CD8-positive, alpha-beta T cell (primary cell): ENCODE measurements at regions of chr10 and their contacts with region 1.

Region 1: DNA sequence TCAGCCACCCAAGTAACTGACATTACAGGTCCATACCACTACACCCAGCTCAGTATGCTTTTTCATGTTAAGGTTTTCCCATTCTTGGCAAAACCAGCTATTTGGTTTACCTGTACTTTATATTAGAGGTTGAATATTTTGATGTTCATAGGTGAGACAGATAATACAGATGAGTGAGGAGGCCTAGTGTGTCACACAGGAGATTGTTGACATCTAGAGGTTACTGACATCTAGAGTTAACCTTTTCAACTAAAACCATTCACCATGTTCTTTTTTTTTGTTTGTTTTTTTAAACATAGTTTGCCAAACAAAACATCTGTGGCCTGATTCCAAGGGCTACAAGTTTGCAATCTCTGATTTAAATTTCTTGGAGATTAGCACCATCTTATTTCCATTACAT is 8.0 kb downstream of the GHITM start:
- DNase-seq: no peak
- ATAC-seq: no peak
- H3K4me3 ChIP-seq: no peak overlapping the region
- H3K4me3 Mint-ChIP-seq: no peak overlapping the region
- H3K27ac ChIP-seq: no peak overlapping the region
- H3K27ac Mint-ChIP-seq: peak overlapping the region; percentile 18
- H3K4me1 ChIP-seq: no peaks in the 10 kb centered on the region
- H3K4me1 Mint-ChIP-seq: peaks cover 23% of the 10 kb centered on the region
- H3K27me3 ChIP-seq: no peaks in the 10 kb centered on the region
- H3K27me3 Mint-ChIP-seq: no peaks in the 10 kb centered on the region
- CTCF ChIP-seq: no peak

Region 2: DNA sequence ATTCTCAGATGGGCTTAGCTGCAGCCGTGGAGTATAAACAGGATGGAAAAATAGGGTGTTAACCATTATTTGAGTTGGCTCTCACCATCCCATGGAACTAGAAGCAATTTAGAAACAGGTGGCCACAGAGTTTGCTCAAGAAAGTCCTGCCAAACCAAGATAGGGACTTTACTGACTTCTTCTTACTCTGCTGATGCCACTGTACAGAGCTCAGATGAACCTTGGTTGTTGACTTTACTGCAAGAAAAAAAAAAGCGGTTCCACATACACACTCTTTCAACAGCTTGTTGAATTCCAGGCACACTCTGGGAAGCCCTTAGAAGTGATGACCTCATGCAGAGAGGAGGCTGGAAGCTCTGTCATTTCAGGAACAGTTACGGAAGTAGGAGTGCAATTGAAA is 1519.0 kb before region 1 on chr10:
- CTCF ChIA-PET with region 1: no interaction called
- POLR2A ChIA-PET with region 1: no interaction called
- intact Hi-C with region 1: no loop called
- DNase-seq: no peak
- ATAC-seq: no peak
- H3K4me3 ChIP-seq: no peak overlapping the region
- H3K4me3 Mint-ChIP-seq: no peak overlapping the region
- H3K27ac ChIP-seq: no peak overlapping the region
- H3K27ac Mint-ChIP-seq: no peak overlapping the region
- H3K4me1 ChIP-seq: no peaks in the 10 kb centered on the region
- H3K4me1 Mint-ChIP-seq: no peaks in the 10 kb centered on the region
- H3K27me3 ChIP-seq: no peaks in the 10 kb centered on the region
- H3K27me3 Mint-ChIP-seq: no peaks in the 10 kb centered on the region
- CTCF ChIP-seq: no peak

Region 3: DNA sequence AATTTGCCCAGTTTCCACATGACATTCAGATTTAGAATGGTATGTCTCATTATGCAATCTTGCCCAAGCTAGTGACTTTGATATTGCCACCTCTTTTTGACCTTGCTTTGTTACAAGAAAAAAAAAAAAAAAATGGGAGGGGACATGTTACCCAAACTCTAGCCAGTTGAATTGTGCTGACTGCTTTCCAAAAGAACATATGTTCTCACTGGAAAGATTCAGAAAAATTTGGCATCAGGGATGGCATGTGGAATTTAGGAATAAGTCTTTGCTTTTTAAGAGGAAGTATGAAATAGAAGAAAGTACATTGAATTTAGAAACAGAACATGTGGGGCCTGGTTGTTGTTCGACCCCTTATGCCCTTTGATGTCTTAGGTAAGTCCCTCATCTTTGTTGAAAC is 1425.5 kb before region 1 on chr10:
- CTCF ChIA-PET with region 1: no interaction called
- POLR2A ChIA-PET with region 1: no interaction called
- intact Hi-C with region 1: no loop called
- DNase-seq: no peak
- ATAC-seq: no peak
- H3K4me3 ChIP-seq: no peak overlapping the region
- H3K4me3 Mint-ChIP-seq: no peak overlapping the region
- H3K27ac ChIP-seq: no peak overlapping the region
- H3K27ac Mint-ChIP-seq: no peak overlapping the region
- H3K4me1 ChIP-seq: no peaks in the 10 kb centered on the region
- H3K4me1 Mint-ChIP-seq: no peaks in the 10 kb centered on the region
- H3K27me3 ChIP-seq: no peaks in the 10 kb centered on the region
- H3K27me3 Mint-ChIP-seq: no peaks in the 10 kb centered on the region
- CTCF ChIP-seq: no peak

Region 4: GRCh38 chr10:84160663-84161362 is 13.5 kb after region 1 on chr10:
- CTCF ChIA-PET with region 1: interaction called, 44 read pairs
- POLR2A ChIA-PET with region 1: no interaction called
- intact Hi-C with region 1: no loop called
- DNase-seq: no peak
- ATAC-seq: no peak
- H3K4me3 ChIP-seq: no peak overlapping the region
- H3K4me3 Mint-ChIP-seq: no peak overlapping the region
- H3K27ac ChIP-seq: no peak overlapping the region
- H3K27ac Mint-ChIP-seq: no peak overlapping the region
- H3K4me1 ChIP-seq: peaks cover 6% of the 10 kb centered on the region
- H3K4me1 Mint-ChIP-seq: peaks cover 17% of the 10 kb centered on the region
- H3K27me3 ChIP-seq: peaks cover 0 to 3% of the 10 kb centered on the region in 2 experiments
- H3K27me3 Mint-ChIP-seq: peaks cover 8% of the 10 kb centered on the region
- CTCF ChIP-seq: no peak

Region 5: GRCh38 chr10:84188815-84189214 is 41.5 kb after region 1 on chr10:
- CTCF ChIA-PET with region 1: interaction called, 11 read pairs
- POLR2A ChIA-PET with region 1: interaction called, 3 read pairs
- intact Hi-C with region 1: no loop called
- DNase-seq: no peak
- ATAC-seq: no peak
- H3K4me3 ChIP-seq: no peak overlapping the region
- H3K4me3 Mint-ChIP-seq: no peak overlapping the region
- H3K27ac ChIP-seq: no peak overlapping the region
- H3K27ac Mint-ChIP-seq: no peak overlapping the region
- H3K4me1 ChIP-seq: peaks cover 17% of the 10 kb centered on the region
- H3K4me1 Mint-ChIP-seq: peaks cover 21% of the 10 kb centered on the region
- H3K27me3 ChIP-seq: no peaks in the 10 kb centered on the region
- H3K27me3 Mint-ChIP-seq: no peaks in the 10 kb centered on the region
- CTCF ChIP-seq: no peak

Region 6: GRCh38 chr10:84256510-84257342 is 109.4 kb after region 1 on chr10:
- CTCF ChIA-PET with region 1: no interaction called
- POLR2A ChIA-PET with region 1: no interaction called
- intact Hi-C with region 1: loop called in 1 of 2 experiments (anchors 5 kb)
- DNase-seq: peak in 7 of 9 experiments; percentile 11 to 60 (median 45)
- ATAC-seq: peak; percentile 62
- H3K4me3 ChIP-seq: no peak overlapping the region
- H3K4me3 Mint-ChIP-seq: no peak overlapping the region
- H3K27ac ChIP-seq: no peak overlapping the region
- H3K27ac Mint-ChIP-seq: no peak overlapping the region
- H3K4me1 ChIP-seq: no peaks in the 10 kb centered on the region
- H3K4me1 Mint-ChIP-seq: peaks cover 3% of the 10 kb centered on the region
- H3K27me3 ChIP-seq: peaks cover 0 to 2% of the 10 kb centered on the region in 2 experiments
- H3K27me3 Mint-ChIP-seq: peaks cover 15% of the 10 kb centered on the region
- CTCF ChIP-seq: peak; percentile 28

Region 7: GRCh38 chr10:84548869-84549268 is 401.5 kb after region 1 on chr10:
- CTCF ChIA-PET with region 1: no interaction called
- POLR2A ChIA-PET with region 1: no interaction called
- intact Hi-C with region 1: no loop called
- DNase-seq: no peak
- ATAC-seq: no peak
- H3K4me3 ChIP-seq: no peak overlapping the region
- H3K4me3 Mint-ChIP-seq: no peak overlapping the region
- H3K27ac ChIP-seq: no peak overlapping the region
- H3K27ac Mint-ChIP-seq: no peak overlapping the region
- H3K4me1 ChIP-seq: no peaks in the 10 kb centered on the region
- H3K4me1 Mint-ChIP-seq: no peaks in the 10 kb centered on the region
- H3K27me3 ChIP-seq: no peaks in the 10 kb centered on the region
- H3K27me3 Mint-ChIP-seq: peaks cover 21% of the 10 kb centered on the region
- CTCF ChIP-seq: no peak